ENCODE measurements at regions of chr9 and their contacts with region 1.

Region 1: DNA sequence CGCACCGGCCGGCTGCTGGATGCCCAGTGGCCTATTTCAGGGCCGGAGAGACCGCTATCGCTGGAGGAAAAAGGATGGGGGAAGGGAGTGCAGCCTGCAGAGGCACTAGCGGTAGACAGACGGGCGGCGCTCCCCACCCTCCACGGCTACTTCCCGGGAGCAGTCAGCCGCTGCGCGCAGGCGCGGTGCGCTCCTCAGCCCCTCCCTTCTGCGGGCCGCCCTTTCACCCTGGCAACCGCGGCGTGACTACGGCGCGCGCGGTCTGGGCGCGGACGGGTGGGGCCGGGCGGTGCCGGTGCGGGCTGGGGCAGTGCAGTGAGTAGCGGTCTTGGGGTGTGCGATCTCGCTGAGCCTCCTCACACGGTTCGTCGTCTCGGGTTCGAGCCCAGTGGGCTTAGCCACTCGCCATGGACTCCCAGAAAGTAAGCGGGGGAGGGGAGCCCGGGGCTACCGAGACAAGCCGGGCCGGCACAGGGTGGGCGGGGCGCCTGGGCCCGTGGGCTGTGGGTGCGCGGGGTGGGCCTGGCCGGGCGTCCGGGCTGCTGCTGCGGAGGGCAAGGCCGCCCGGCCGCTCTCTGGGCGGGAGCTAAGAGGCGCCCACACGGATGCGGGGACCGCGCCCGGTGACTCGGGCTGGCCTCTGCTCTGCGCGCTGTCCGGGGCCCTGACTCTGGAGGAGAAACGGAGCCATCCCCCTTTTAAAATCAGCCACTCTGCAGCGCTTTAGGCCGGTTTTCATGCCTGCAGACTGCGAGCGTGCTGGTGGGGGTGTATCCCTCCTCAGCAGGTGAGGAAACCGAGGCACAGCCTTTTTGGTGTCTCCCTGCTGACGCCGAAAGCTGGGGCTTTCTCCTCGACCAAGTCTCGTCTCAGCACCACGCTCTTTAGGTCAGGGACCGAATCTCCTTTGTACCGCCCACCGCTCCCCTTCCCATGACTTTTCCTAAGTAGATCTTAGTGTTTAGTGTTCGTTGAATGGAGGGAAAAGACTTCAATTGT is at the start of gene FSD1L:
- DNase-seq: peak; percentile 80
- H3K4me3 Mint-ChIP-seq: peak within 1 kb of the TSS; percentile 83
- H3K27ac Mint-ChIP-seq: no peak within 1 kb of the TSS
- H3K4me1 Mint-ChIP-seq: peaks cover 17% of the 10 kb centered on the region
- H3K27me3 Mint-ChIP-seq: peaks cover 20% of the 10 kb centered on the region
- total RNA-seq, gene FSD1L: 3.2 and 3.7 TPM in 2 replicates

Region 2: GRCh38 chr9:105483618-105484017 is 35.5 kb after region 1 on chr9:
- intact Hi-C with region 1: no loop called
- DNase-seq: no peak
- H3K4me3 Mint-ChIP-seq: no peak overlapping the region
- H3K27ac Mint-ChIP-seq: no peak overlapping the region
- H3K4me1 Mint-ChIP-seq: no peaks in the 10 kb centered on the region
- H3K27me3 Mint-ChIP-seq: peaks cover 2% of the 10 kb centered on the region

Region 3: GRCh38 chr9:105557771-105558610 is 109.9 kb after region 1 on chr9 and contains the start of gene FKTN:
- intact Hi-C with region 1: loop called (anchors 5 kb)
- DNase-seq: peak; percentile 73
- H3K4me3 Mint-ChIP-seq: peak within 1 kb of the TSS; percentile 90
- H3K27ac Mint-ChIP-seq: peak within 1 kb of the TSS; percentile 51
- H3K4me1 Mint-ChIP-seq: peaks cover 13% of the 10 kb centered on the region
- H3K27me3 Mint-ChIP-seq: no peaks in the 10 kb centered on the region
- total RNA-seq, gene FKTN: 10.3 and 11.3 TPM in 2 replicates

Measured in activated T-helper 2 cell treated with anti-CD3 and anti-CD28 coated beads, Interferon-gamma antibody, Interleukin-2, Interleukin-4, amounts not matched to agents 10 μg/mL and 5 μg/mL and 100 μg/mL, durations not matched to agents 14 hours and 24 hours and 36 hours (primary cell).